OCI-LY7 (cell line): ENCODE measurements at regions of chr6 and their contacts with region 1.

Region 1: GRCh38 chr6:136403166-136403980 is 113.7 kb upstream of the BCLAF1 start:
- DNase-seq: no peak
- H3K4me3 ChIP-seq: no peak overlapping the region
- H3K27ac ChIP-seq: no peak overlapping the region
- H3K4me1 ChIP-seq: no peaks in the 10 kb centered on the region
- CTCF ChIP-seq: no peak

Region 2: GRCh38 chr6:135586841-135587240 is 816.5 kb before region 1 on chr6:
- CTCF ChIA-PET with region 1: no interaction called
- POLR2A ChIA-PET with region 1: interaction called, 10 read pairs
- intact Hi-C with region 1: no loop called
- DNase-seq: no peak
- H3K4me3 ChIP-seq: no peak overlapping the region
- H3K27ac ChIP-seq: no peak overlapping the region
- H3K4me1 ChIP-seq: no peaks in the 10 kb centered on the region
- CTCF ChIP-seq: no peak